ENCODE measurements at regions of chr21 and their contacts with region 1.

Region 1: GRCh38 chr21:33655591-33656221 is 13.4 kb downstream of the ITSN1 start:
- DNase-seq: peak; percentile 81
- H3K4me3 Mint-ChIP-seq: peak overlapping the region; percentile 24
- H3K27ac Mint-ChIP-seq: peak overlapping the region; percentile 82
- H3K4me1 Mint-ChIP-seq: peaks cover 28% of the 10 kb centered on the region
- H3K27me3 Mint-ChIP-seq: no peaks in the 10 kb centered on the region
- CTCF ChIP-seq: no peak

Region 2: GRCh38 chr21:33801424-33802420 is 146.0 kb after region 1 on chr21:
- CTCF ChIA-PET with region 1: no interaction called
- POLR2A ChIA-PET with region 1: interaction called, 9 read pairs
- intact Hi-C with region 1: loop called (anchors 5 kb)
- DNase-seq: peak; percentile 97
- H3K4me3 Mint-ChIP-seq: peak overlapping the region; percentile 51
- H3K27ac Mint-ChIP-seq: peak overlapping the region; percentile 87
- H3K4me1 Mint-ChIP-seq: peaks cover 21% of the 10 kb centered on the region
- H3K27me3 Mint-ChIP-seq: no peaks in the 10 kb centered on the region
- CTCF ChIP-seq: no peak

Measured in MCF 10A (cell line).